Heart right ventricle (tissue), 16 donors: ENCODE measurements at regions of chr13 and their contacts with region 1.

Region 1: DNA sequence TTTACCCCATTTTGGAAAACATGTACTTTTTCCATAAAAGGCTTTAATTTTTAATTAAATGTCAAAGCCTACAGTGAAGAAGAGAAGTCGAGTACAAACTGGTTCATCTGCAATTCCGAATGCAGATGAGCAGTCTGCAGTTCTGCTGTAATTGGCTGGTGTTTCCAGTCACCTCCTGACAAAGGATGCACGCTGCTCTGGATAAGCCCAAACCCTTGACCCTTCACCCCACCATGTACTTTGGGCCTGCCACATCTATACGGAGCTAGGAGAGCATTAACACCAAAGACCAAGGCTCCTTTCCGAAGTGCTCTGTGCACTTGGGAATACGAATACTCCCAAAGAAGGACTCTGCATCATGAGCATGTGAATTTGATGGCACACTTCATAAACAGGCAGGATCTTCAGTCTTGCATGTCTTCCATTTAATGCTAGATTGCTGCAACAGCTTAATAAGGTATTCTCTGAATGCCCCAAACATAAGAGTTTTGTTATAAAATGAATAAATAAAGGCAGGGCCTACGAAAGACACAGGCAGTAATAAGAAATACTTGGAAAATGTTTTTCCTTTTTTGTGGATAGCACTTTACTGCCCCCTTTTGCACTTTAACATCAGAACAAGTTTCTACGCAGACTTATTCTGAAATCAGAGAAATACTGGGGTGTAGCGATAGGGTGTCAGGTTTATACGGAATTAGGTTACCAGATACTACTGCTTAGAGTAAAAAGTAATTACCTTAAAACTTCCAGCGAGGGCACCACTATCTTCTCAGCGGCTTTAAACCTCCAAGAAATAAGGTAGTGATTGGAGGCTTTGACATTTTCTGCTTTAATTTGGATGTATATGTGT is 15.0 kb downstream of the EFNB2 start:
- DNase-seq: no peak
- ATAC-seq: no peak
- H3K4me3 ChIP-seq: no peak overlapping the region
- H3K27ac ChIP-seq: no peak overlapping the region
- H3K4me1 ChIP-seq: peaks cover 0 to 92% (median 33%) of the 10 kb centered on the region in 9 donors
- H3K27me3 ChIP-seq: peaks cover 0 to 3% (median 0%) of the 10 kb centered on the region in 7 donors
- CTCF ChIP-seq: peak; percentile 16 to 68 (median 44)

Region 2: DNA sequence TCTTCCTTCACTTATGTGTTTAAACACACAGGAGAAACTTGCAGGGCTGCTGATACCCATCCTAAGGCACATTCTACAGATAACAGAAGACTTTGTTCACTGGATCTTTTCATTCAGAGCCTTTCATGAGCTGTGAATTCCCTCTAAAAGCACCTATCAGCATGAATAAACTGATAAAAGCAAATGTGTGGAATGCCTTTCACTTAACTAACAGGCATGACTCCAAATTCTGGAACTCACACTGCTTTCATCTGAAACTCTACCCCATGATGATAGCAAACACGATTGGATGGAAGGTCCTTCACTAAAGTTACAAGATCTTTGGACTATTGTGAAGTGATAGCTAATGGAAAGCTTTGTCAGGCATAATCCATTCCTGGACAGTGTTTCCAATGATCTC is 442.2 kb before region 1 on chr13:
- intact Hi-C with region 1: loop called in 3 of 10 experiments (anchors 5 to 10 kb)
- DNase-seq: no peak
- ATAC-seq: no peak
- H3K4me3 ChIP-seq: no peak overlapping the region
- H3K27ac ChIP-seq: no peak overlapping the region
- H3K4me1 ChIP-seq: no peaks in the 10 kb centered on the region
- H3K27me3 ChIP-seq: peaks cover 0 to 2% (median 0%) of the 10 kb centered on the region in 7 donors
- CTCF ChIP-seq: no peak

Region 3: GRCh38 chr13:106083620-106084350 is 436.6 kb before region 1 on chr13:
- intact Hi-C with region 1: loop called in 3 of 10 experiments (anchors 5 to 10 kb)
- DNase-seq: peak in 1 of 2 donors; percentile 32
- ATAC-seq: peak in 4 of 8 donors; percentile 47 to 67 (median 60)
- H3K4me3 ChIP-seq: no peak overlapping the region
- H3K27ac ChIP-seq: no peak overlapping the region
- H3K4me1 ChIP-seq: no peaks in the 10 kb centered on the region
- H3K27me3 ChIP-seq: no peaks in the 10 kb centered on the region
- CTCF ChIP-seq: peak; percentile 23 to 76 (median 61)

Region 4: GRCh38 chr13:106858908-106859904 is 338.8 kb after region 1 on chr13:
- intact Hi-C with region 1: no loop called
- DNase-seq: no peak
- ATAC-seq: no peak
- H3K4me3 ChIP-seq: no peak overlapping the region
- H3K27ac ChIP-seq: no peak overlapping the region
- H3K4me1 ChIP-seq: no peaks in the 10 kb centered on the region
- H3K27me3 ChIP-seq: peaks cover 0 to 3% (median 0%) of the 10 kb centered on the region in 7 donors
- CTCF ChIP-seq: no peak